Dendritic cell treated with granulocyte-macrophage colony-stimulating factor and Interleukin-4, amounts not matched to agents 40 ng/mL and 50 ng/mL, for 4 days (primary cell): ENCODE measurements at regions of chr18 and their contacts with region 1.

Region 1: DNA sequence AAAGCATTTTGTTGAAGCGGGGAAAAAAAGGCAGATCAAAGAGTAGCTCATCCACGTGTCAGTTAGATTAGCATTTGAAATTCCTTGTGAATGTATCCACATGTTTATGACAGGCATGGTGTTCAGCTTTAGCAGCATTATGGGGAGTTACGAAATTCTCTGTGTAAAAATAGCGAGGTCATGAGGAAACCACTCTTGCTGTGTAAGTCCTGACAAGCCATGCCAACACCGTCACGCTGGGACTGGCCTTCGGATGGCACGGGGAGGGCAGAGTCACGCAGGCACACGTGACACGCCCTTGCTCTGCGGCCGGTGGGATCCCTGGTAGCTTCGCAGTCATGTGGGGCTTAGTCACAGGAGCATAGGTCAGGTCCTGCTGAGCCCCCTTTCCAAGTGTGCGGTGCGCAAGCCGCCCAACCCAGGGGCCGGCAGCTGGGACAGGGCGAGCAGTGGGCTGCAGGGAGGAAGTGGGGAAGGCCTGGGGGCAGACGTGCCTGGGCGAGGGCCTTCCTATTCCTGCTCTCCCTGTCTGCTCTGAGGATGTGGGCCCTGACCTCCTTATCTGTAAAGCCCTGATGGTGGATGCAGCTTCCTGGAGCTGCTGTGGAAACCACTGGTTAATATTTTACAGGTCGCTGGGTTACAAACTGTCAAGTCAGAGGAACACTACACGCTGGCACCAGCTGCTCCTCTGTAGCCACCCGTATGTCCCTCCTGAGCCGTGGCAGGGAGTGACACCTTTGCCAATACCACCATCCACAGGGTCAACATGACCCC is 18.0 kb downstream of the MBP start:
- H3K4me3 Mint-ChIP-seq: peak overlapping the region; percentile 32
- H3K27ac Mint-ChIP-seq: peak overlapping the region; percentile 95
- H3K4me1 Mint-ChIP-seq: peaks cover 92% of the 10 kb centered on the region
- H3K27me3 Mint-ChIP-seq: no peaks in the 10 kb centered on the region

Region 2: GRCh38 chr18:76492669-76493212 is 621.9 kb before region 1 on chr18:
- intact Hi-C with region 1: loop called (anchors 10 kb)
- H3K4me3 Mint-ChIP-seq: peak overlapping the region; percentile 93
- H3K27ac Mint-ChIP-seq: peak overlapping the region; percentile 96
- H3K4me1 Mint-ChIP-seq: peaks cover 62% of the 10 kb centered on the region
- H3K27me3 Mint-ChIP-seq: no peaks in the 10 kb centered on the region

Region 3: DNA sequence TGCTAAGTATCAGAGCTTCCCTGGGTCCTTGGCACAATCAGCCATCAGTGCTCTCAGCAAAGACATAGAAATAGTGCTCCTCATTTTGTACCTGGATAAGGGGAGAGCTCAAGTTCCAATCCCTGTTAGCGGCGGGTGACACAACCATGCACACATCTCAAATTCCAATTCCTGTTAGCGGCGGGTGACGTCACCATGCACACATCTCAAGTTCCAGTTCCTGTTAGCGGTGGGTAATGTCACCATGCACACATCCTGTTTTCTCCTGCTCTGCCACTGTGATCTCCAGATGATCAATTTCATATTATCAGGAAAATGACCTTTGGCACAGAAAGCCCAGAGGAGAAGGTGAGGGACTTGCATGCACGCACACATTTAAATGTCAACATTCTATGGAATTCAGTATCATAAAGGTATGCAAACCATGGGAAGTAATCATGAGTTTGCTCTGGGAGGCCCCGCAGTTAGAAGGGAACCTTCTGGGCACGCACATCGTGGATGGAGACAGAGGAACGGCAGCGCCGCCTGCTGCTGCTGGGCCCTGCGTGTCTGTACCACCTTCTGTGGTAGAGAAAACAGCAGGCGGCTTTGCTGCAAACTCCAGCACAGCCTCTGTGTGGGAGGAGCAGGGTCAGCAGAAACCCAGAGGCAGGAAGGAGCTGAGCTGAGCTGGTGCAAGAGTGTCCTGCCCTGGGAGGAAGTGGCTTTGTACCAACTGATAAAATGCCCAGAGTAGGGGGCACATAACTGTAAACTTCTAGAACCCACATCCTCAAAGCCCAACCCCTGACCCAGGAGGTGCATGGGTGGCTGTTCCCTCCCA is 59.8 kb before region 1 on chr18:
- intact Hi-C with region 1: loop called (anchors 2 kb)
- H3K4me3 Mint-ChIP-seq: peak overlapping the region; percentile 66
- H3K27ac Mint-ChIP-seq: peak overlapping the region; percentile 97
- H3K4me1 Mint-ChIP-seq: peaks cover 73% of the 10 kb centered on the region
- H3K27me3 Mint-ChIP-seq: no peaks in the 10 kb centered on the region

Region 4: DNA sequence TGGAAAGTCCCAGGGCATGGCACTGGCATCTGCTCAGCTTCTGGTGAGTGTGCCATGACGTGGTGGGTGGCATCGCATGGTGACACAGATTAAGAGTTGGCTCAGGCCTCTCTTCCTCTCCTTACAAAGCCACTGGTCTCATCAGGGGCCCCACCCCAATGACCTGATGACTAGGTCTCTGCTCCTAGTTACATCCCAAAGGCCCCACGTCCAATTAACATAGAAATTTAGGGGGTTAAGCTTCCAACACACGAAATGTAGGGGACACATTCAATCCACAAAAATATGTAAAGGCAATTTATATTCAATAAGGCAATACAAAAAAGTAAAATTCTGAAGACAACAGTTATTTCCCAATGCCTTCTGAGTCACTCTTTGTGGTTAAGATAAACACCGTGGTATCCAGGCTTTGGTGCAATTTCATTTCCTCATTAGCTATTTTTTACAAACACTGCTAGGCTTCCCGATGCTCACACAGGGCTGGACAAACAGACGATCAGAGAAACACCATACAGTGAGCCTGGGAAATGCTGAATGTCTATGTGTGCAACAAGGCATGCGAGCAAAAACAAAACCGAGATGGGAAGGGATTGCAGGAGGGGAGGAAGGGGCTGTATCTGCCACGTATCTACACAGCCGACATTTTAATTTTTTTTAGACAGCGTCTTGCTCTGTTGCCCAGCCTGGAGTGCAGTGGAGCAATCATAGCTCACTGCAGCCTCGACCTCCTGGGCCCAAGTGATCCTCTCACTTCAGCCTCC is 49.2 kb before region 1 on chr18:
- intact Hi-C with region 1: loop called (anchors 1 kb)
- H3K4me3 Mint-ChIP-seq: no peak overlapping the region
- H3K27ac Mint-ChIP-seq: peak overlapping the region; percentile 93
- H3K4me1 Mint-ChIP-seq: peaks cover 92% of the 10 kb centered on the region
- H3K27me3 Mint-ChIP-seq: no peaks in the 10 kb centered on the region

Region 5: DNA sequence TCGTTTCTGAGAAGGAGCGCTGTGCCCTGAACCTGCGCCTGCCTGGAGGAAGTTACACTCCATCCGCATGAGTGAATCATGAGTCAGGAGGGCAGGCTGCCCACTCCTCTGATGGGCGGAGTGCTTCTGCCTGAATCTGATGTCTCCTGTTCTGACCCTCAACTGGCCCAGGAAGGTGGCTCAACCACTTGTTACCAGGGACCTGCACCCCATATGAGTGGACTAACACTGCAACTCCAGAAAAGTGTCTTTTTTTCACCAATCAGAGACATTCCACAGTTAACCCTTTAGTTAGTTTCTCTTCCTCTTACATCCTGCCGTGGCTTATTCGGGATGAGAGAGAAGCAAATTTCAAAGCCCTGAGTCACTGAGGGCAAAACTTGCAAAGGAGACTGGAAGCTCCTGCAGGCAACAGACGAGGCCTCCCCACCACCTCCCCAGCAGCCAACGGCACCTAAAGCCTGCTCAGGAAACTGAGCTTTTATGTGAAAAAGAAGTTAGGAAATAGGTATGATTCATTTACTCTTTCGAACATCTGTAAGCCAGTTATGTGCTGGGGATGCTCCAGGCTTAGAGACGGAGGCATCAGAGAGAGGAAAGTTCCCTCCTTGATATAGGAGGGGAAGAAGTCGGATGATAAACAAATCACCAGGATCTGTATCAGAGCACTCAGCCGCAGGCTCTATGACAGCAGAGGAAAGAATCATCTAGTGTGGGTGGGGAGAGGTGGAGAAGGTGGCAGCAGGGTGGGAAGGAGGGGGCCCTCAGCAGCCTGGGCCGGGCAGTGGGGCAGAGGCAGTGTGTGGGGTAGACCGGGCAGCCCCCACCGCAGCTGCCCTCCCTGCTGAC is 13.0 kb before region 1 on chr18:
- intact Hi-C with region 1: loop called (anchors 2 kb)
- H3K4me3 Mint-ChIP-seq: peak overlapping the region; percentile 59
- H3K27ac Mint-ChIP-seq: peak overlapping the region; percentile 81
- H3K4me1 Mint-ChIP-seq: peaks cover 86% of the 10 kb centered on the region
- H3K27me3 Mint-ChIP-seq: no peaks in the 10 kb centered on the region